Ascending aorta (tissue), 2 donors: ENCODE measurements at regions of chr10 and their contacts with region 1.

Region 1: GRCh38 chr10:77391605-77392235 is 245.9 kb downstream of the KCNMA1 start:
- DNase-seq: peak in 1 of 2 donors; percentile 92
- H3K4me3 ChIP-seq: no peak overlapping the region
- H3K27ac ChIP-seq: peak overlapping the region; percentile 93 to 94
- H3K4me1 ChIP-seq: peaks cover 12 to 67% of the 10 kb centered on the region in 2 donors
- H3K27me3 ChIP-seq: no peaks in the 10 kb centered on the region
- CTCF ChIP-seq: peak; percentile 64 to 81 (median 64)

Region 2: DNA sequence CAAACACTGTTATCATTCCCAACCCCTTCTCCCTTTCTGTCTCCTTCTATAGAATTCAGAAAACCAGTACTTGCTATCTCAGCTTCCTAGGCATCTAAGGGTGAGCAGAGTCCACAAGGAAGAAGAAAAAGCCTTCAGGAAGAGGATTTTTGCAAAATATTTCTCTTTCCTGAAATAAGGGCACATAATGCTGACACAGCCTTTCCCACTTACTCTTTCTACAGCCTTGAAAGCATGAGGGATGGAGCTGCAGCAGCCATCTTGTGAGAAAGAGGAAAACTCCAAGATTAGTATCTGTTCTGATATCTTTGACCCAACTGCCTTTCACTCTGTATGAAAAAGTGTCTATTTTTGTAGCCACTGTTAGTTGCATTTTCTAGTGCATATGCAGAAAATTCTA is 580.3 kb before region 1 on chr10:
- intact Hi-C with region 1: no loop called
- DNase-seq: no peak
- H3K4me3 ChIP-seq: no peak overlapping the region
- H3K27ac ChIP-seq: no peak overlapping the region
- H3K4me1 ChIP-seq: no peaks in the 10 kb centered on the region
- H3K27me3 ChIP-seq: no peaks in the 10 kb centered on the region
- CTCF ChIP-seq: no peak

Region 3: GRCh38 chr10:77165445-77166208 is 226.1 kb before region 1 on chr10:
- intact Hi-C with region 1: loop called (anchors 2 kb)
- DNase-seq: peak in 1 of 2 donors; percentile 74
- H3K4me3 ChIP-seq: peak overlapping the region in 1 of 2 donors; percentile 41
- H3K27ac ChIP-seq: peak overlapping the region; percentile 64 to 72
- H3K4me1 ChIP-seq: peaks cover 0 to 28% of the 10 kb centered on the region in 2 donors
- H3K27me3 ChIP-seq: no peaks in the 10 kb centered on the region
- CTCF ChIP-seq: peak; percentile 68 to 83 (median 77)

Region 4: GRCh38 chr10:77301305-77301730 is 90.4 kb before region 1 on chr10:
- intact Hi-C with region 1: loop called (anchors 5 kb)
- DNase-seq: no peak
- H3K4me3 ChIP-seq: no peak overlapping the region
- H3K27ac ChIP-seq: peak overlapping the region in 1 of 2 donors; percentile 44
- H3K4me1 ChIP-seq: peaks cover 3 to 45% of the 10 kb centered on the region in 2 donors
- H3K27me3 ChIP-seq: no peaks in the 10 kb centered on the region
- CTCF ChIP-seq: no peak

Region 5: GRCh38 chr10:77416311-77417135 is 24.8 kb after region 1 on chr10:
- intact Hi-C with region 1: loop called (anchors 1 kb)
- DNase-seq: peak in 1 of 2 donors; percentile 74
- H3K4me3 ChIP-seq: no peak overlapping the region
- H3K27ac ChIP-seq: peak overlapping the region; percentile 93 to 98
- H3K4me1 ChIP-seq: peaks cover 18 to 89% of the 10 kb centered on the region in 2 donors
- H3K27me3 ChIP-seq: no peaks in the 10 kb centered on the region
- CTCF ChIP-seq: no peak

Region 6: GRCh38 chr10:77592946-77593636 is 201.4 kb after region 1 on chr10:
- intact Hi-C with region 1: loop called (anchors 5 kb)
- DNase-seq: peak; percentile 76 to 90
- H3K4me3 ChIP-seq: no peak overlapping the region
- H3K27ac ChIP-seq: peak overlapping the region; percentile 86 to 96
- H3K4me1 ChIP-seq: peaks cover 12 to 60% of the 10 kb centered on the region in 2 donors
- H3K27me3 ChIP-seq: no peaks in the 10 kb centered on the region
- CTCF ChIP-seq: no peak